Activated B cell treated with CpG ODN at 0.5 μM for 24 hours (primary cell): ENCODE measurements at regions of chr9 and their contacts with region 1.

Region 1: GRCh38 chr9:121201738-121202533 is at the start of gene RAB14:
- DNase-seq: peak; percentile 100
- ATAC-seq: peak; percentile 88
- H3K4me3 Mint-ChIP-seq: peak within 1 kb of the TSS; percentile 94
- H3K27ac Mint-ChIP-seq: peak within 1 kb of the TSS; percentile 91
- H3K4me1 Mint-ChIP-seq: peaks cover 63% of the 10 kb centered on the region
- H3K27me3 Mint-ChIP-seq: no peaks in the 10 kb centered on the region
- CTCF ChIP-seq: no peak
- total RNA-seq, gene RAB14: 55.9 and 63.8 TPM in 2 replicates

Region 2: GRCh38 chr9:120714088-120714845 is 487.7 kb before region 1 on chr9 and contains the start of gene MEGF9:
- CTCF ChIA-PET with region 1: no interaction called
- POLR2A ChIA-PET with region 1: interaction called, 3 read pairs
- intact Hi-C with region 1: loop called (anchors 5 kb)
- DNase-seq: peak; percentile 95
- ATAC-seq: peak; percentile 94
- H3K4me3 Mint-ChIP-seq: peak within 1 kb of the TSS; percentile 90
- H3K27ac Mint-ChIP-seq: peak within 1 kb of the TSS; percentile 86
- H3K4me1 Mint-ChIP-seq: peaks cover 38% of the 10 kb centered on the region
- H3K27me3 Mint-ChIP-seq: no peaks in the 10 kb centered on the region
- CTCF ChIP-seq: no peak
- total RNA-seq, gene MEGF9: 8.5 and 9.0 TPM in 2 replicates

Region 3: GRCh38 chr9:120985810-120986222 is 216.1 kb before region 1 on chr9:
- CTCF ChIA-PET with region 1: interaction called, 4 read pairs
- POLR2A ChIA-PET with region 1: no interaction called
- intact Hi-C with region 1: loop called (anchors 10 kb)
- DNase-seq: no peak
- ATAC-seq: no peak
- H3K4me3 Mint-ChIP-seq: no peak overlapping the region
- H3K27ac Mint-ChIP-seq: no peak overlapping the region
- H3K4me1 Mint-ChIP-seq: no peaks in the 10 kb centered on the region
- H3K27me3 Mint-ChIP-seq: no peaks in the 10 kb centered on the region
- CTCF ChIP-seq: no peak

Region 4: GRCh38 chr9:121107041-121107440 is 94.9 kb before region 1 on chr9:
- CTCF ChIA-PET with region 1: no interaction called
- POLR2A ChIA-PET with region 1: no interaction called
- intact Hi-C with region 1: no loop called
- DNase-seq: no peak
- ATAC-seq: peak; percentile 54
- H3K4me3 Mint-ChIP-seq: no peak overlapping the region
- H3K27ac Mint-ChIP-seq: peak overlapping the region; percentile 19
- H3K4me1 Mint-ChIP-seq: peaks cover 23% of the 10 kb centered on the region
- H3K27me3 Mint-ChIP-seq: no peaks in the 10 kb centered on the region
- CTCF ChIP-seq: no peak

Region 5: DNA sequence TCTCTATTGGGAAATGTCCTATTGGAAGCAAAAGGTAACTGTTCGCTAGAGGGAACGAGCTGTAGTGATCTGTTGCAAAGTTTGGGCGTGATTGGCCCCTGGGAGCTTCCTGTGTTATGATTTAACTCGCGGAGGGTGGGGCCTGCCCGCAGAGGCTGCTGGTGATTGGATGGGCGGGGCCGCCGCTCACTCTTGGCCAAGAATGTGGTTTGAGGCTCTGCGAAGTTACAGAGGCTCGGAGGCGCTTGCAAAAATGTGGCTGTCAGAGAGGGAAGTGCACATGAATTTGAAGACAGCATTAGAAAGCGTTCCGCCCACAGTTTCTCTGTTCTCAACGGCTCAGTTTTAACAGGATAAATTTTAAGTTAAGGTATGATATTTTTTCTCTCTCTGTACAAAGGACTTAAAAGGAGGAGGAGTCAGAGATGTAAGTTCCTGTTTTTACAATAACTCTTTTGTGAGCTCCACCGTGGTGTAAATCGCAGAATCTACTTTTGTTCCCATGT is 80.3 kb before region 1 on chr9:
- CTCF ChIA-PET with region 1: interaction called, 4 read pairs
- POLR2A ChIA-PET with region 1: interaction called, 21 read pairs
- intact Hi-C with region 1: loop called (anchors 1 kb)
- DNase-seq: peak; percentile 84
- ATAC-seq: peak; percentile 99
- H3K4me3 Mint-ChIP-seq: peak overlapping the region; percentile 91
- H3K27ac Mint-ChIP-seq: peak overlapping the region; percentile 95
- H3K4me1 Mint-ChIP-seq: peaks cover 45% of the 10 kb centered on the region
- H3K27me3 Mint-ChIP-seq: no peaks in the 10 kb centered on the region
- CTCF ChIP-seq: no peak

Region 6: DNA sequence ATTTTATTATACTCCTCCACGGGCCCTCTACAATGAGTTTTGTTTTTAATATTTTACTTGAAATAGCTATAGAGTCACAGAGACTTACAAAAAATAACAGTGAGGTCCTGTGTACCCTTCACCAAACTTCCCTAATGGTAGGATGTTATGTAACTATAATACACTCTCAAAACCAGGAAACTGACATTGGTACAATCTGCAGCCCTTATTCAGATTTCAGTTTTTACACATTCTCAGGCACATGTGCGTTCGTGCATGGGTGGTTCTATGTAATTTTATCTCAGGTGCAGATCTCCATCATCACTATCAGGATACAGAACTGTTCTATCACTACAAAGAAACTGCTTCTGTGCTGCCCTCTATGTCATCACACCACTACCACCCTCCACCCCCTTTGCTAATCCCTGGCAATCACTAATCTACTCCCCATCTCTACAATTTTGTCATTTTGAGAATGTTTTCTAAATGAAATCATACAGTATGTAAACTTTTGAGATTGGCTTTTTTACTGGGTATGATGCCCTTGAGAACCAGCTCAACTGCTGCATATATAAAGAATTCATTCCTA is 16.7 kb before region 1 on chr9:
- CTCF ChIA-PET with region 1: interaction called, 4 read pairs
- POLR2A ChIA-PET with region 1: interaction called, 36 read pairs
- intact Hi-C with region 1: loop called (anchors 1 kb)
- DNase-seq: no peak
- ATAC-seq: peak; percentile 51
- H3K4me3 Mint-ChIP-seq: no peak overlapping the region
- H3K27ac Mint-ChIP-seq: peak overlapping the region; percentile 62
- H3K4me1 Mint-ChIP-seq: peaks cover 66% of the 10 kb centered on the region
- H3K27me3 Mint-ChIP-seq: no peaks in the 10 kb centered on the region
- CTCF ChIP-seq: no peak

Region 7: DNA sequence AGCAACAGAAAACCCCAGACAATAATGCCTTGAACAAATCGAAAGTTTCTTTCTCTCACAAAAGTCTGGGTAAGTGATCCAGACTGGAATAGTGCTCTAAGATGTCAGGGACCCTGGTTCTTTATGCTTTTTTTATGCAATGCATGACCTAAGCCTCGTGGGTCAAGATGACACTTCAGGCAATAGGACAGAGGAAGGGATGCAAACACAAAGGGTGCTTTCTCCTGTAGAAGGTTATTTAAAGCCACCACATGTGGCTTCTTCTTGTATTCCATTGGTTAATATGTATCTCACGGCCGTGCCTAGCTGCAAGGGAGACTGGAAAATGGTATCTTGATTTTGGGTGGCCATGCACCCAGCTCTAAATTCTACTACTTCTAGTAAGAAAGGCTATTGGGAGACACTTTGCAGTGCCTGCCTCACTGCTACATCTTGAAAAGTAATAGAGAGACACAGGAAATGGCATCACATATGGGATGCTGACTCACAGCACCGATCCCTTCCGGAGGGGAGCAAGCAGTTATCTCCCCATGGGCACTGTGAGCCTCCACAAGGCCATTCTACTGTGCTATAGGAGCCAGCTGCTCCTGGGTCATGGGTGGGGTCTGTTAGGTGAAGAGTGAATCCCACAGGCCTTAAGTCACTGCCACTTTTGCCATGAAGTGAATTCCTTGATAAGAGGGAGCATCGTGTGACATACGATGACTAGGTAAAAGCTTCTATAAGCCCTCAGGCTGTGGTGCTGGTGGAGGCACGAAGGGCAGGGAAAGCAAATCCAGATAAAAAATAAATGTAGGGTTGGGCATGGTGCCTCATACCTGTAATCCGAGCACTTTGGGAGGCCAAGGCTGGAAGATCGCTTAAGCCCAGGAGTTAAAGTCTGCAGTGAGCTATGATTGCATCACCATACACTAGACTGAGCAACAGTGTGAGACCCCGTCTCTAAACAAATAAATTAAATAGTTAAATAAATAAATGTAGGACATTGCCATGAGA is 32.3 kb after region 1 on chr9:
- CTCF ChIA-PET with region 1: no interaction called
- POLR2A ChIA-PET with region 1: no interaction called
- intact Hi-C with region 1: no loop called
- DNase-seq: no peak
- ATAC-seq: no peak
- H3K4me3 Mint-ChIP-seq: no peak overlapping the region
- H3K27ac Mint-ChIP-seq: no peak overlapping the region
- H3K4me1 Mint-ChIP-seq: no peaks in the 10 kb centered on the region
- H3K27me3 Mint-ChIP-seq: no peaks in the 10 kb centered on the region
- CTCF ChIP-seq: no peak

Region 8: DNA sequence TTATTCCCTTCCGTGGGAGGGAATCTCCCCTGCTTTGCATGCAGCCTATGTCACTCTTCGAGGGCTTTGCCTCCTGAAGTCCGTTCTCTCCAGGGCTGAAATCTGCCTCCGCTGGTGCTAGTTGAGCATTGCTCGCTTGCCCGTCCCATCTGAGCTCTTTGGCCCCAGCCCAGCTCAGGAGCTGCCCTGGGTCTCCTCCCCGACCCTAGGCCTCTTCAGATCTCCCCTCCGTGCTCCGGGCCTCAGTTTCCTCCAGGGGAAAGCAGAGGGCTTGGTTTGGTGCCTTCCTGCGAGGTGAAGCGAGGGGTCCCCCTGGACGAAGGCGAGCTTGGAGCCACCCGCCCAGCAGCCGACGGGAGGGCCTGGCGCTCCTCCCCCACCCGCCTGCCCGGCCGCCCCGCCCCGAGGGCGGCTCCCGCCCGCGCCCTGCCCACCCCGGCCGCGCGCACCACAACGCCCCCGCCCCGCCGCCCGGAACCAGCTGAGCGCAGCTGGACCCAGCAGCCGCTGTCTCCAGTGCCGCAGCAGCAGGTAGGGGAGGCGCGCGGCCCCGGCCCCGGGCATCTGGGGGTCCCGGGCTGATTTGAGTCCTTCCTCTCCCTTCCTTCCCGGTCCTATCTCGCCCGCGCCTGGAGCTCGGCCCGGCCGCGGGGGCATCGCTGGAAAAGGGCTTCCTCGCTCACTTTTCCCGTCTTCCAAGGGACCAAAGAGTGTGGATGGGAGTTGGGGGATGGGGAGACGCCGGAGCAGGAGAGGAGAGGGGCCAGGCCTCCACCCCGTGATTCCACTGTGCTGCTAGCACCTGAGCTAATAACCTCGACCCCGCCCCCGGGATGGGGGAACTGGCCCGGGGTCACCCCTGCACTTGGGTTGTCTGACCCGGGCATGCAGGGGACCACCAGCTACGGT is 66.0 kb after region 1 on chr9 and contains the start of gene GSN:
- CTCF ChIA-PET with region 1: no interaction called
- POLR2A ChIA-PET with region 1: interaction called, 10 read pairs
- intact Hi-C with region 1: no loop called
- DNase-seq: peak; percentile 60
- ATAC-seq: peak; percentile 91
- H3K4me3 Mint-ChIP-seq: peak within 1 kb of the TSS; percentile 84
- H3K27ac Mint-ChIP-seq: peak within 1 kb of the TSS; percentile 46
- H3K4me1 Mint-ChIP-seq: peaks cover 39% of the 10 kb centered on the region
- H3K27me3 Mint-ChIP-seq: no peaks in the 10 kb centered on the region
- CTCF ChIP-seq: no peak
- total RNA-seq, gene GSN: 21.9 and 26.5 TPM in 2 replicates

Region 9: DNA sequence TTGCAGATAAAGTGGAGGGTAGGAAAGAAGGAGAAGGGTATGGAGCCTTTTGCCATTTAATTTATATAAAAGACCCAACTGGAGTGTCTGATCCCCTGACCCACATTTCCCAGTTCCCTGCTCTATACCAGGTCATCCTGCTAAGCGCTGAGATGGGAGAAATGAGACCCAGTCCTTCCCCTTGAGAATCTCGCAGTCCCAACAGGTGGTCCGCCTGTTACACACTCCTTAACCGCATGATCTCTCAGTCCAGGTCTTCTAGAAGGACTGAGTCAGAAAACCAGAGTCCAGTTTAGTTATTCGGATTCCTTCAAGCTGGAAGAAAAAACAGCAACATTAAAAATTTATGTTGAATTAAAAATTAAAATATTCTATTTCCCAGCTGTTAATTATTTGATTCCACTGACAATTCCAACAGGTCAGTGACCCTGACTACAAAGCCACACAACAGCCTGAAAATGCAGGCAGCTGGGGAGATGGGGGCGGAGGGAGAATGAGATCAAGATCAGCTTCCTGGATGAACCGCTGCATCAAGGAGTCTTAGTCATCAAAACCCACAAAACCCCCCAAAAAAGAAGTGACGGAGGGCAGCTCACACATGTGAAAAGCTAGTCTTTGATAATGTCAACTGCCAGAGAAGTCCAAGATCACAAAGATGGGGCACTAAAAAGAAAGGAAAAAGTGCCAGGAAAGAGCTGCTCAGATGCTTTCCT is 253.7 kb after region 1 on chr9:
- CTCF ChIA-PET with region 1: no interaction called
- POLR2A ChIA-PET with region 1: no interaction called
- intact Hi-C with region 1: no loop called
- DNase-seq: no peak
- ATAC-seq: no peak
- H3K4me3 Mint-ChIP-seq: no peak overlapping the region
- H3K27ac Mint-ChIP-seq: no peak overlapping the region
- H3K4me1 Mint-ChIP-seq: no peaks in the 10 kb centered on the region
- H3K27me3 Mint-ChIP-seq: peaks cover 20% of the 10 kb centered on the region
- CTCF ChIP-seq: no peak